ENCODE measurements at regions of chrX and their contacts with region 1.

Region 1: GRCh38 chrX:17590892-17591740 is 146.2 kb upstream of the SCML1 start:
- DNase-seq: peak; percentile 72

Region 2: DNA sequence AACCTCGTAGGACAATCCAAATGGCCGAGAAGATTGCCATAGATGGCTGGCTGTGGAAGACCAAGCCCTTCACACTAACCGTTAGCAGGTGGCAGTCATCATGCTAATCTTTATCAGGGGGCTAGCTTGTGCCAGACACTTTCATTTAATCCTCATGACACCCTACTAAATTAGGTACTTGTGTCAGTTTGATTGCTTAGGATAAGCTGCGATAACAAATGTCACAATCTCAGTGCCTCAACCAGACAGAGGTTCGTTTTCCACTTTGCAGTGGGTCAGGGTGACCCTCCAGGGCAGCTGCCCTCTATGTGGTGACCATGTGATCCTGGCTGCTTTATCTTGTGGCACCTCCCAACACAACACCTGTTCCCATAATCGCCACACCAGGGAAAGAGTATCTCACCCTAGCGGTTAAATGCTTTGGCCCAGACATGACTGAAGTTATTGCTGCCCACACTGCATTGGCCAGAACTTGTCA is 583.9 kb before region 1 on chrX:
- in situ Hi-C with region 1: no loop called
- DNase-seq: peak; percentile 51

Region 3: GRCh38 chrX:17242470-17242869 is 348.6 kb before region 1 on chrX:
- in situ Hi-C with region 1: loop called (anchors 25 kb)
- DNase-seq: peak; percentile 69

Region 4: DNA sequence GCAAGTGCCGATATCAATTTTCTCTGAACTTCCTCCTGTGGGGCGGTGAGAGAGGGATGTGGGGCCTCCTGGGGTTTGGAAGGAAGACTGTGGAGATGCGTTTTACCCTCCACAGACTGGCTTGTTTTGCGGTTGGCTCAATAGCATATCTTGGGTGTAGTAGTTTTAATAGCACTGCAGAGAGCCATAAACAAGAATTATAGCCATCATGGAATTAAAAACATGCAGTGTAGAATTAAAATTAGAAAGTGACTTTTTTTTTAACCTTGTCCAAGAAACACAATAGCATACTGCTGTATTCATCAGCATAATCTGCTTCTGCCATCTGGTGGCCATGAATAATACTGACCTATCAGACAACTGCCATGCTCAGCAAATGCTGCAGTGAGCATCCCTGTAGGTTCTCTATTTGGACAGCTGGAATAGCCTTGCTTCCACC is 98.9 kb after region 1 on chrX:
- in situ Hi-C with region 1: no loop called
- DNase-seq: peak; percentile 53

Region 5: GRCh38 chrX:18252644-18253359 is 661.7 kb after region 1 on chrX:
- in situ Hi-C with region 1: no loop called
- DNase-seq: no peak

Measured in KBM-7 (cell line).